ENCODE measurements at regions of chr18 and their contacts with region 1.

Region 1: DNA sequence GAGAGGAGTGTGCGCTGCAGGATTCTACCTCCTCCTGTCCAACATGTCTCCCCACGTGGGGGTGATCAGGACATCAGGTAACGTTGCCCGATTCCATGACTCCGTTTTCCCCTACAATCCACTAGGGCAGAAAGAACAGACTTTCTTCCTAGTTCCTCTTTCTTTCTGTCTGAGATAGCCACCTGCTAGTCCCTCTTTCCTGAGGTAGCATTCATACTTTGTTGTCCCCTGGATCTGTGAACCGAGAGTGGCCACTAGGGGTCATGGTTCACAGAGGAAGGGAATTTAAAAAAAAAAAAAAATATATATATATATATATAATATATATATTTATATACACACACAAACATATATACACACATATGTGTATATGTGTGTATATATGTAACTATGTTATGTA is 210.0 kb upstream of the ZNF521 start:
- DNase-seq: no peak
- ATAC-seq: no peak
- H3K4me3 ChIP-seq: no peak overlapping the region
- H3K27ac ChIP-seq: no peak overlapping the region
- H3K4me1 ChIP-seq: peaks cover 0 to 1% (median 0%) of the 10 kb centered on the region in 12 donors
- H3K27me3 ChIP-seq: no peaks in the 10 kb centered on the region
- CTCF ChIP-seq: peak in 7 of 12 donors; percentile 12 to 37 (median 26)
- POLR2A ChIP-seq: no peak

Region 2: DNA sequence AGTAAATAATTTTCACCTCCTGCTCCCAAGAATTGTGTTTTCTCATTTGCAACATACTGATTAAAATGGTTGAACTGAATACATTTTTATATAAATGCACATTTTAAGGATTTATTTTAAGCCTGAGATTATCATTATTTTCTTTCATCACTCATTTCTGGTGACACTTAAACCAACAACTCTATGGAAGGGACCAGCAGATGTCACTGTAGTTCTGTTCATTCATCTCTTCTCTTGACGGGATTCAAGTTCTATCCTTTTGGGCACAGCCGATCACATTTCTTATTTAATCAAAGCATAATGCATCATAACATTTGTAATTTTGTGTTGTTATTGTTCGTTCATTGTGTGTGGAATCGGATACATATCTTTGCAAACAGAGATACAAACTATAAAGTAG is 683.6 kb before region 1 on chr18:
- intact Hi-C with region 1: loop called in 1 of 10 experiments (anchors 10 kb)
- DNase-seq: peak in 1 of 5 donors; percentile 19
- ATAC-seq: peak; percentile 47 to 71 (median 58)
- H3K4me3 ChIP-seq: no peak overlapping the region
- H3K27ac ChIP-seq: no peak overlapping the region
- H3K4me1 ChIP-seq: peaks cover 0 to 5% (median 0%) of the 10 kb centered on the region in 12 donors
- H3K27me3 ChIP-seq: no peaks in the 10 kb centered on the region
- CTCF ChIP-seq: peak; percentile 35 to 80 (median 66)
- POLR2A ChIP-seq: no peak

Region 3: DNA sequence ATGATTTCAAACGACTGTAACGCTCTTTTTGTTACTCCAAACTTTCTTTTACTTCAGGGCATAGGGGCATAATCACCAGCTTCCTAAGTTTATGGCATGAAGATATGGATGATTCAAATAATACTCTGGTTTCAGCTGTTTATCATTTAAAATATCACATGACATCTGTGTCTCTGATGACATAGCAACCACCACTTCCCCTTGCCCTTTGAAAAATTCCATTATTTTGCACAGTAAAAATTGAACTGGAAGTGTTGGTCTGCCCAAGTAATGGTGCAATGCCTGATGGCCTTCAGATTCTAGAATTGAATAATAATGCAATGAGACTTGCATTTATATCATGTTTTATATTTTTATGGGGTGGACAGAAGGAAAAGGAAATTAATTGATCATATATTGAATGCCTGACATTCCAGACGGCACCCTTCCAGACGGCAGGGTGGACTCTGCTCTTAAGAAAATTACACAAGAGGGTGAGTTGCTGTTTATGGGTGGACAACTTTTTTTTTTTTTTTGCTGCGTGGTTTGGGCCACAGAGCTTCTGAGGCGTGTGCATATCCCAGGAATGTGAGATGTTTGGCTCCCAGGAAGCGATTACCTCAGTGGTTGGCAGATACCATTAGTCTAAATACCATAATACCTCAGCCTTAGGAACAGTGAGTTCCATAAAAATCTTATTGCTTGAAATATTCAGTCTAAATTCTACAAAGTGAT is 108.2 kb before region 1 on chr18:
- intact Hi-C with region 1: loop called in 1 of 10 experiments (anchors 10 kb)
- DNase-seq: no peak
- ATAC-seq: peak; percentile 34 to 75 (median 54)
- H3K4me3 ChIP-seq: no peak overlapping the region
- H3K27ac ChIP-seq: no peak overlapping the region
- H3K4me1 ChIP-seq: peaks cover 0 to 13% (median 0%) of the 10 kb centered on the region in 12 donors
- H3K27me3 ChIP-seq: no peaks in the 10 kb centered on the region
- CTCF ChIP-seq: no peak
- POLR2A ChIP-seq: no peak

Region 4: GRCh38 chr18:25503567-25504081 is 58.3 kb before region 1 on chr18:
- intact Hi-C with region 1: no loop called
- DNase-seq: peak; percentile 46 to 64 (median 51)
- ATAC-seq: peak; percentile 93 to 98 (median 96)
- H3K4me3 ChIP-seq: peak overlapping the region; percentile 8 to 60 (median 45)
- H3K27ac ChIP-seq: peak overlapping the region in 3 of 12 donors; percentile 14 to 30 (median 18)
- H3K4me1 ChIP-seq: peaks cover 0 to 5% (median 0%) of the 10 kb centered on the region in 12 donors
- H3K27me3 ChIP-seq: no peaks in the 10 kb centered on the region
- CTCF ChIP-seq: no peak
- POLR2A ChIP-seq: no peak

Region 5: DNA sequence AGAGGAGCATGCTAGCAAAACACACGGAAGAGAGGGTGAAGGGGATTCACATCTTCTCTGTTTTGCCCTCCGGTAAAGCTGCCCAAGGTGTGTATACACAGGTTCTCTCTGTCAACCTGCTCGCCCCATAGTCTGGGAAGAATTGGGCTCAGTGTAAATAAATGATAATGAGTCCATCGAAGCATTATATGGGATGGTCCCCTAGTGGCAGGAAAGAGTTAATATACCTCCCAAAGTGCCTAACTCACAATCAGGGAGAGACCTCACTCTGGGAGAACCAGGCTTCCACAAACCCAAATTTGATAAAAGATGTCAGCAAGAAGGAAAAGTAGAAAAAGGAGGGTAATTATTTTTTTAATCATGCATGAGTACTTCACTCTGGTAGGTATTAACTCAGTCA is 52.2 kb after region 1 on chr18:
- intact Hi-C with region 1: loop called in 2 of 10 experiments (anchors 5 to 10 kb)
- DNase-seq: no peak
- ATAC-seq: no peak
- H3K4me3 ChIP-seq: no peak overlapping the region
- H3K27ac ChIP-seq: no peak overlapping the region
- H3K4me1 ChIP-seq: no peaks in the 10 kb centered on the region
- H3K27me3 ChIP-seq: no peaks in the 10 kb centered on the region
- CTCF ChIP-seq: peak in 1 of 12 donors; percentile 9
- POLR2A ChIP-seq: no peak

Region 6: GRCh38 chr18:25832001-25832604 is 270.2 kb after region 1 on chr18:
- intact Hi-C with region 1: loop called in 1 of 10 experiments (anchors 10 kb)
- DNase-seq: peak; percentile 43 to 77 (median 65)
- ATAC-seq: peak; percentile 79 to 90 (median 86)
- H3K4me3 ChIP-seq: no peak overlapping the region
- H3K27ac ChIP-seq: no peak overlapping the region
- H3K4me1 ChIP-seq: peaks cover 0 to 12% (median 0%) of the 10 kb centered on the region in 12 donors
- H3K27me3 ChIP-seq: no peaks in the 10 kb centered on the region
- CTCF ChIP-seq: peak; percentile 60 to 83 (median 70)
- POLR2A ChIP-seq: no peak

Measured in heart left ventricle (tissue), 16 donors.